ENCODE measurements at regions of chr12 and their contacts with region 1.

Region 1: DNA sequence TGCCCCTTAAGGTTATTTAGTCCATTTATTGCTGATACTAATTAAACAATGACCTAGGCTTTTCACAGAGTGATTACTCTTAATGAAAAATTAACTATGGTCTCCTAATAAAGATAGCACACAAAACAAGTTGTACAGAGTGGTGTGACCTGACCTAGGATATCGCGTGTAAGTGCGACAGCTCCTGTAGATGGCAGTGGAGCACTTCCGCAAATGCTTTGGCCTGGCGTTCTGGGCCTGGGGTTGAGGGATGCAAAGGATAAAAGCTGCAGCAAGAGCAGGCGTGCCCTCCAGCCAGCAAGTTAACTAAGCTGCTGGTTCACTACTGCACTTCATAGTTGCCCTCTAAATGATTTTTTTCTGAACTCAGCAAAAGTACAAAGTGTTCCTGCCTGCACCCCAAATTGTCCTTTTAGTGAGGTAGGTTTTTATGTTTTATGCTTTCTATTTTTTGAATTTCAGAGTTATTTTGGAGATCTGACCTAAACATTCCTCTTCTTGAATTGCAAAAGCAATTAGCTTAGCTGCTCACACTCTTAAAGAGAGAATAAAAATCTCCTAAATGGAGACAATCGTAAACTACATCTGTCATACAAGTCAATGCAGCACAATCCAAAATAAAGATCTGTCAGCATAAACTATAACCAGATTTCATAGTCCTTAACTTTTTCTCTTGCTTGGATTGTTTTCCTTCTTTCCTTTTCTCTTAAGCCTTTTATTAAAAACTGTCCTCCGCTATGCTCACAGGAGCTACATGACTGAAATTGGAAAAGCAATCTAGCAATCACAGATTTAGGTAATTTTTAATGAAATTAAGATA is 379.6 kb downstream of the LRIG3 start:
- DNase-seq: peak; percentile 74 to 88
- ATAC-seq: peak; percentile 93
- H3K4me3 ChIP-seq: no peak overlapping the region
- H3K27ac ChIP-seq: no peak overlapping the region
- H3K4me1 ChIP-seq: peaks cover 0 to 3% of the 10 kb centered on the region in 2 donors
- H3K27me3 ChIP-seq: no peaks in the 10 kb centered on the region

Region 2: DNA sequence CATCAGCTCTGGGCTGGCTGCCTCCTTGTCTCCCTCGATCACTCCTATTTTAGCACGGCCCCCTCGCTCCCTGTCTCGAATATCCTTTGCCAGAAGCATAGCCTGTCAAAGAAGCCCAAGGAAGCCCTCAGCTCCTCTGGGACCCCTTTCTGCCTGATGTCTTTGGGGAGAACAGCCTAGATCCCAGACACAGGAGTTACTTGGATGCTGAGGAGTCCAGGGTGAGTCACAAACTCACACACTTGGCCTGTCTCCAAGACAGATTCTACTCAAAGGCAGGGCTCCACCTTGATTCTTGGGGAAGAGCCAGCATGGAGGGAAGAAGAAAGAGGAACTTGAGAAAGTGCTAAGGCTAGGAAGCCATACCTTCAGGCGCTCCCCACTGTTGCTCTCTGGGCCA is 730.2 kb before region 1 on chr12:
- intact Hi-C with region 1: no loop called
- DNase-seq: no peak
- ATAC-seq: no peak
- H3K4me3 ChIP-seq: no peak overlapping the region
- H3K27ac ChIP-seq: no peak overlapping the region
- H3K4me1 ChIP-seq: no peaks in the 10 kb centered on the region
- H3K27me3 ChIP-seq: no peaks in the 10 kb centered on the region

Region 3: DNA sequence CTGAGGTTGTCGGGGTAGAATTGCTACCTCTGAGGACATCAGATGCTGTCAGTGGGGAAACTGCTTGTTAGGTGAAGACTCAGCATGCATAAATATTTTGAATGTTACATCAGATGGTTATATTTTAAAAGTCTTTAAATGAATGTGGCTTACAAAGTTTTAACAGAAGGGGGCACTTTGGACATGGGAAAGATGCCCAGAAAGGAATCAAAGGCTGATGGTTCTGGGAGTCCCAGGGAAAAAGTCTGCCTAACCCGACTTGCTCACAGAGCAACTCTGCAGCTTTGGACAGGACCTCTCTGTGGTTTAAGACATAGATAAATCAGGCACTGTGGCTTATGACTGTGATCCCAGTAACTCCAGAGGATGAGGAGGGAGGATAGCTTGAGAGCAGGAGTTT is 124.5 kb before region 1 on chr12:
- intact Hi-C with region 1: loop called in 1 of 2 experiments (anchors 5 kb)
- DNase-seq: no peak
- ATAC-seq: no peak
- H3K4me3 ChIP-seq: no peak overlapping the region
- H3K27ac ChIP-seq: no peak overlapping the region
- H3K4me1 ChIP-seq: peaks cover 0 to 6% of the 10 kb centered on the region in 2 donors
- H3K27me3 ChIP-seq: no peaks in the 10 kb centered on the region

Region 4: DNA sequence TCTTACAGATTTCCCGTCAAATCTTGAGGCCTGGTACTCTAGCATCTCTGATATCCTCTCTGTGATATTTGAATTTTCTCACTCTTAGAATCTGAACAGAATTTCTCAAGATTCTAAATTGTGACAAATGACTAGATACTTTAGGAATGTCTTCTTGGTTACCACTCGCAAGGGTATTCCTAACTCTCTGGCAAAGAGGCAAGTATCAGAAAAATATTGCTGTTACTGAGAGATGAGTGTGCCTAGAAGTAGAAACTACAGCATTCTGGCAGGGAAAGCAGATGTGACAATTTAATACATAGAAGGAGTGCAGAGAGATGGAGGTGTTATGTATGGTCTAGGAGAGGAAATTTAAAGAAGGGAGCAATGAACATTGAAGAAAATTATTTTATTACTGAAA is 88.1 kb before region 1 on chr12:
- intact Hi-C with region 1: no loop called
- DNase-seq: no peak
- ATAC-seq: no peak
- H3K4me3 ChIP-seq: no peak overlapping the region
- H3K27ac ChIP-seq: no peak overlapping the region
- H3K4me1 ChIP-seq: peaks cover 0 to 4% of the 10 kb centered on the region in 2 donors
- H3K27me3 ChIP-seq: no peaks in the 10 kb centered on the region

Region 5: GRCh38 chr12:58629376-58629775 is 88.7 kb after region 1 on chr12:
- intact Hi-C with region 1: no loop called
- DNase-seq: no peak
- ATAC-seq: no peak
- H3K4me3 ChIP-seq: no peak overlapping the region
- H3K27ac ChIP-seq: no peak overlapping the region
- H3K4me1 ChIP-seq: no peaks in the 10 kb centered on the region
- H3K27me3 ChIP-seq: no peaks in the 10 kb centered on the region

Region 6: GRCh38 chr12:58765653-58766512 is 225.2 kb after region 1 on chr12:
- intact Hi-C with region 1: no loop called
- DNase-seq: no peak
- ATAC-seq: no peak
- H3K4me3 ChIP-seq: no peak overlapping the region
- H3K27ac ChIP-seq: no peak overlapping the region
- H3K4me1 ChIP-seq: no peaks in the 10 kb centered on the region
- H3K27me3 ChIP-seq: no peaks in the 10 kb centered on the region

Region 7: GRCh38 chr12:59087077-59087673 is 546.5 kb after region 1 on chr12:
- intact Hi-C with region 1: loop called (anchors 5 to 10 kb)
- DNase-seq: no peak
- ATAC-seq: no peak
- H3K4me3 ChIP-seq: no peak overlapping the region
- H3K27ac ChIP-seq: no peak overlapping the region
- H3K4me1 ChIP-seq: no peaks in the 10 kb centered on the region
- H3K27me3 ChIP-seq: no peaks in the 10 kb centered on the region

Region 8: GRCh38 chr12:59149997-59150642 is 609.4 kb after region 1 on chr12:
- intact Hi-C with region 1: loop called (anchors 5 to 10 kb)
- DNase-seq: no peak
- ATAC-seq: peak; percentile 95
- H3K4me3 ChIP-seq: no peak overlapping the region
- H3K27ac ChIP-seq: no peak overlapping the region
- H3K4me1 ChIP-seq: no peaks in the 10 kb centered on the region
- H3K27me3 ChIP-seq: no peaks in the 10 kb centered on the region

Region 9: DNA sequence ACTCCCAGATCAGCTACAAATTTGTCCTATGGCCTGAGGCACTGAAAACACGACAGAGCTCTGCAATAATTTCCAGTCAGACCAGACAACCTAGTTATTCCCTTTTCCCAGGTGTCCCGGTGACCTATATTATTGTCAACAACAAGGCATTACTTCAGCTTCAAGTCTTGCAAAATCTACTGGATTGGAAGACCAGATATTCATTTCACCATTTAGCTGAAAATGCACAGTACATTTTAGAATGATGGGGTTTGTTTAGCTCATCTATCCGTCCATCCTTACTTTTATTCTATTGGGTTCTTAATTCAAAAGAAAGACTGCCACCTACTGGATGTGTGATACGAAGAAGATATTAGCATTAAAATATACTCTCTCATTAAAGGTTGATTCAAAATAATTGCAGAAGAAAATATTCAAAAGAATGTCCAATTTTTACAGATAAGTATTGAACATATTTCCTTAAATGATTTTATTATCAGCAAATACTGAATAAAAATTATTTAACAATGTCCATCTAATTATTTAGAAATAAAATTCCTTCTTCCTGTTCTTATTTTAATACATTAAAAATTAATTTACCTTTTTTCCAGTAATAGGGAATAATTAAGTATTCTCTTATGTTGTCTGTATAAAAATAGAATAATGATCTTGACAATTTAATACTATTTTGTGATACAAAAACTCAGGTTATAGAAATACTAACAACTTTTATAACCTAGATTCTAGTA is 624.5 kb after region 1 on chr12:
- intact Hi-C with region 1: loop called in 1 of 2 experiments (anchors 5 kb)
- DNase-seq: no peak
- ATAC-seq: no peak
- H3K4me3 ChIP-seq: no peak overlapping the region
- H3K27ac ChIP-seq: no peak overlapping the region
- H3K4me1 ChIP-seq: no peaks in the 10 kb centered on the region
- H3K27me3 ChIP-seq: no peaks in the 10 kb centered on the region